Activated T-helper 2 cell treated with anti-CD3 and anti-CD28 coated beads, Interferon-gamma antibody, Interleukin-2, Interleukin-4, amounts not matched to agents 10 μg/mL and 5 μg/mL and 100 μg/mL, durations not matched to agents 14 hours and 24 hours and 36 hours (primary cell): ENCODE measurements at regions of chr4 and their contacts with region 1.

Region 1: DNA sequence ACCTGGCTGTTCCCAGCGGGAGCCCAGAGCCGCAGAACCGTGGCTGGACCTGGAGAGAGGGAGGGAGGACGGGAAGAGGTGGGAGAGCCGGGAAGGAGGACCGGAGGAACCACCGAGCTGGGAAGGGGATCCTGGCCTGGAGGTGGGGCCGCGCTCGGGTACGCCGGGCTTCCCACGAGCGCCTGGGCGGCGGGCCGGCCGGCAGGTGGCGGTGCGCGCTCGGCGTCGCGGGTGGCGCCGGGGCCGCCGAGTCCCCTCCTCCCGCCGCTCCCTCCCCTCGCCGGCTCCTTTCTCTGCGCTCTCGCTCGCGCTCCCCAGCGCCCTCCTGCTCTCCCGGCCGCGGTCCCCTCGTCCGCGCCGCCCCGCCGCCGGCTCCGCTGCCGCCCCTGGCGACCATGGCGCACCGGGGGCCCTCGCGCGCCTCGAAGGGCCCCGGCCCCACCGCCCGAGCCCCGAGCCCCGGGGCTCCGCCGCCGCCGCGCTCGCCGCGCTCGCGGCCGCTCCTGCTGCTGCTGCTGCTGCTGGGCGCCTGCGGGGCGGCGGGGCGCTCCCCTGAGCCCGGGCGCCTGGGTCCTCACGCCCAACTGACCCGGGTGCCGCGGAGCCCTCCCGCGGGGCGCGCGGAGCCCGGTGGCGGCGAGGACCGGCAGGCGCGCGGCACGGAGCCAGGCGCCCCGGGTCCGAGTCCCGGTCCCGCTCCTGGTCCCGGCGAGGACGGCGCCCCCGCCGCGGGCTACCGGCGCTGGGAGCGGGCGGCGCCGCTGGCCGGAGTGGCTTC is at the start of gene SORCS2:
- DNase-seq: peak; percentile 29
- H3K4me3 Mint-ChIP-seq: no peak within 1 kb of the TSS
- H3K27ac Mint-ChIP-seq: no peak within 1 kb of the TSS
- H3K4me1 Mint-ChIP-seq: no peaks in the 10 kb centered on the region
- H3K27me3 Mint-ChIP-seq: peaks cover 48% of the 10 kb centered on the region
- total RNA-seq, gene SORCS2: 0.02 and 0.05 TPM in 2 replicates

Region 2: GRCh38 chr4:7089213-7089986 is 103.0 kb before region 1 on chr4:
- intact Hi-C with region 1: no loop called
- DNase-seq: no peak
- H3K4me3 Mint-ChIP-seq: no peak overlapping the region
- H3K27ac Mint-ChIP-seq: no peak overlapping the region
- H3K4me1 Mint-ChIP-seq: peaks cover under 1% of the 10 kb centered on the region
- H3K27me3 Mint-ChIP-seq: peaks cover 25% of the 10 kb centered on the region

Region 3: GRCh38 chr4:7101692-7102515 is 90.5 kb before region 1 on chr4:
- intact Hi-C with region 1: no loop called
- DNase-seq: peak; percentile 48
- H3K4me3 Mint-ChIP-seq: peak overlapping the region; percentile 94
- H3K27ac Mint-ChIP-seq: no peak overlapping the region
- H3K4me1 Mint-ChIP-seq: peaks cover 9% of the 10 kb centered on the region
- H3K27me3 Mint-ChIP-seq: peaks cover 20% of the 10 kb centered on the region

Region 4: DNA sequence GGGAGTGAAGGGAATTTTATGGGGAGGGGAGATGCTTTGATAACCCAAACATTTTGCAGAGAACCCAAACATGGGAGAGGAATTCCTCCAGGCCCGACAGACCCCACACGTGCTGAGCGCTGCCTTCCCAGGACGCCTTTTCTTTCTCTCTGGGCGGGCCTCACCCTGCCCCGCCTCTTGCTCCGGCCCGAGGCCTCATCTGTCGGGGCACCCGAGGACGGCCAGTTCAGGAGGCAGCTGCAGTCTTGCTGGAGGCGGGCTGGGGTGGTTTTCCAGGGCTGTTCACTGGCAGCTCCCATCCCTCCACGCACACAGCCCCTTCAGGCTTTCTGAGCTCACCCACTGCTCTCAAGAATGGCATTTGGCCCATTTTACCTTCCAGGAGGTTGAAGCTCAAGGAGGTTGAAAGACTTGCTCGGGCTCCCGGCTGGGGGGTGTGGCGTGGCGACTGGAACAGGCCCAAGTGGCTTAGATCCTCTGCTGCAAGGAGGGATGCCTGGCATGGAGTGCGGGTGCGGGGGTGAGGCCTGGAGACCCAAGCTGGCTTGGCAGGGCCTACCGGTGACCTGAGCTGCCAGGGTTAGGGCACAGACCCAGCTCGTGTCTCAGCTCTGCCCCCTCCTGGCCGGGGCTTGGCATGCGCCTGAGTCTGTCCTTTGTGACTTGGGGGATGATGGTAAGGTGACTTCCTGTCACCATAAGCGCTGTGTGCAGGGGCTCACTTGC is 143.1 kb after region 1 on chr4:
- intact Hi-C with region 1: loop called (anchors 5 kb)
- DNase-seq: peak; percentile 40
- H3K4me3 Mint-ChIP-seq: no peak overlapping the region
- H3K27ac Mint-ChIP-seq: no peak overlapping the region
- H3K4me1 Mint-ChIP-seq: no peaks in the 10 kb centered on the region
- H3K27me3 Mint-ChIP-seq: no peaks in the 10 kb centered on the region

Region 5: DNA sequence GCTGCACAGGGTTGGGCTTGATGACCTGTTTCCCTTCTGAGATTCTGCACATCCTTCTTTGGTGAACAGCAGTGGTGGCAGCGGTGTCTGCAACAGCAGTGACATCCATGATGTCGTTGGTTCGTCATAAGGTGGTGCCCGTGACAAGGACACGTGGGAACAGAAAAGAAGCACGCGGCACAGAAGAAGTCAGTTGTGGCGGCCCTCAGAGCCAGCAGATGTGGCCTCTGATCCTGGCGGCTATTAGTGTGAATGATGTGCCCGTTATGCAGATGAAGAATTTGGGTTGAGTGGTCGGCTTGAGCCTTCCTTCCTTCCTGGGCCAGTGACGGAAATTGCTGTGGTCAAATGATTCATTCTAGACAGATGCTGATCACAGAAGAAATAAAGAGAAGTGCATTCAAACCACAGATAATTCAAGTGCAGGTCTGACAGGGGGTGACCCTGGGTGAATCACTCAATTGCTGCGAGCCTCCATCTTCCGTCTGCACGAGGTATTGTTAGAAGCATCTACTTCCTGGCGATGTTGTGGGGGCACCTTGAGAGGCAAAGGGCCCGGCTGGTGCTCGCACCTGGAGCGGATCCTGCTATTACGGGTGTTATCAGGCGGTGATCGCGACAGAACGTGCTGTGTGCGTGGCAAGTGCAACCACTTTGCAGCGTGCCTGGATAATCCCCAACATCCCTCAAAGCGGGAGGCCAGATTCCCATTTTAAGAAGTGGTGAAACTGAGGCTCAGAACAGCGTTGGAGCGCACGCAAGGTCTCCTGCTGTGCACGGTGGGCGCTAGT is 457.5 kb after region 1 on chr4:
- intact Hi-C with region 1: loop called (anchors 5 kb)
- DNase-seq: peak; percentile 66
- H3K4me3 Mint-ChIP-seq: no peak overlapping the region
- H3K27ac Mint-ChIP-seq: peak overlapping the region; percentile 88
- H3K4me1 Mint-ChIP-seq: peaks cover 34% of the 10 kb centered on the region
- H3K27me3 Mint-ChIP-seq: no peaks in the 10 kb centered on the region

Region 6: DNA sequence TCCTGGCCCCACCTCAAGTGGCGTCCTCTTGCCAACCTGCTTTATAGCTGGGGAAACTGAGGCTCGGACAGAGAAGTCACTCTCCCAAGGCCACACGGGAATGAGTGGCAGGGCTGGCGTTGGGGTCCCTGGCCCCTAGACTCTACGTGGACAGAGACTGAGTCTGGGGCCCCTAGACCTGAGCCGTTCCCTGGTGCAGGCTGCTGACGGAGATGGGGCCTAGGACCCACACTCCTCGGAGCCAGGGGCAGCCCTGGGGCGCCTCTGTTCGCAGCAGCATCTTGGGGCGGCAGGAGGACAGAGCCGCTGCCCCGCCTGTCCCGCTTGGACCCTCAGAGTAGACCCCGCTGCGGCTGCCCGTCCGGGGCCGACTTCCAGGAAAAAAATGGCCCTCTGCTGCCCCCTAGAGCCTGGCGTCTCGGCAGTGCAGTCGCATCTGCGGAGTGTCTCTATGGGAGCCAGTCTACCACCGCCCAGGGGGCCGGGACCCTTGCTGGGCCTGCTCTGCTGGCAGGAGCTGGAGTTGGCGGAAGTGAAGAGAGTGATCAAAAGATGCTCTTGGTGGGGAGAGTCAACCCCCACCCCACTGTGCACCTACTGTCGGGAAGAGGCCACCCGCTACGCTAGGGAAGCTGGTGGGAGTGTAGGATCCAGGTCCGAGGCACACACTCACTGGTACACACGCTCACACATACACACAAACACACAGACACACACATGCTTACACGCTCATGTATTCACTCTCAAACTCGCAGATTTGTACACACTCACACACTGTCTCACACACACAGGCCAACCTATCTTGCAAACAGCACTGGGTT is 527.1 kb after region 1 on chr4:
- intact Hi-C with region 1: loop called (anchors 5 kb)
- DNase-seq: peak; percentile 28
- H3K4me3 Mint-ChIP-seq: no peak overlapping the region
- H3K27ac Mint-ChIP-seq: no peak overlapping the region
- H3K4me1 Mint-ChIP-seq: no peaks in the 10 kb centered on the region
- H3K27me3 Mint-ChIP-seq: peaks cover 1% of the 10 kb centered on the region